ENCODE measurements at regions of chr18 and their contacts with region 1.

Region 1: GRCh38 chr18:48295585-48296311 is 113.4 kb downstream of the ZBTB7C start:
- DNase-seq: peak in 2 of 10 donors; percentile 30 to 43
- H3K4me3 ChIP-seq: no peak overlapping the region
- H3K27ac ChIP-seq: no peak overlapping the region
- H3K27me3 ChIP-seq: no peaks in the 10 kb centered on the region
- CTCF ChIP-seq: peak in 39 of 56 donors; percentile 7 to 58 (median 35)

Region 2: GRCh38 chr18:48410095-48410920 is 114.6 kb after region 1 on chr18:
- intact Hi-C with region 1: loop called in 1 of 2 experiments (anchors 10 kb)
- DNase-seq: peak; percentile 75 to 93 (median 86)
- H3K4me3 ChIP-seq: peak overlapping the region; percentile 55 to 86 (median 77)
- H3K27ac ChIP-seq: peak overlapping the region in 47 of 59 donors; percentile 19 to 88 (median 66)
- H3K27me3 ChIP-seq: peaks cover 0 to 14% (median 0%) of the 10 kb centered on the region in 45 donors
- CTCF ChIP-seq: peak in 16 of 56 donors; percentile 2 to 50 (median 16)